ENCODE measurements at regions of chr9 and their contacts with region 1.

Region 1: DNA sequence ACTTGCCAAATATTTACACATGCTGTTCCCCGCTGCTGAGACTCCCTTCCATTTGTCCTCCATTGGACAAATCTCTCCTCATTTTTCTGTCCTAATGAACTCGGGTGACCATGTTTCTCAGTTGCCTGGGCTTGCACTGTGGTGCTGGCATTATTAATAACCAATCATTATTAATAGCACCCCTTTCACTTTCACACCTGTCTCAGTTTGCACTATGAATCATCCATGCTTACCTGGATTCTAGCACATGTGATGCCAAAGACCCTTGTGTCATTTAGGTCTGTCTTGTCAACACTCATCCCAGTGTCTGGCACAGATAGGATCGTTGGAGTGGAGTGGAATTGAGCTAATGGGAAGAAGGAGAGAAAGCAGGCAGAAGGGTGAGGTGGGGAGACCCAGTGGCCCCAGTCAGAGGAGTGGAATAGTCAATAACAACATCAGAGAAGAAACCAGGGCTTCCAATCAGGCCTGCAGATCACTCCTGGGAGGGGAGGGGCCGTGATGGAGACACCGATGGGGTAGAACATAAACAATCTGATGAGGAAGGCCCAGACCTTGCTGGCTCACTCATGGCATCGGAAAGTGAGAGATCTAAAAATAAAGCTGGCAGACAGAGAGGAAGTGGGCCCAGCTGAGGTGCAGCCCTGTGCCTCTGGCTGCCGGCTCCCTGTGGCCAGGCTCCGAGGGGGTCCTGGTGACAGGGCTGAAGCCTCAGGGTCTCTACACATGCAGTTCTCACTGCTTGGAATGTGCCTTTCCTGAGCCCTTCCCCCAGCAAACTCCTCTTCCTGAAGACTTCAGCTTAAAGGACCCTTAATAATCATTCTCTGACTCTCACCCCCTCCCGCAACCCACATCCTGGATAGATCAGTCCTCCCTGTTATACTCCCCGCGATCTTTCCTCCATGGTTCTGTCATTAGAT is 33.5 kb upstream of the CRB2 start:
- DNase-seq: peak; percentile 41 to 80 (median 62)
- ATAC-seq: peak; percentile 90 to 92 (median 92)
- H3K4me3 ChIP-seq: peak overlapping the region; percentile 12 to 29
- H3K4me3 Mint-ChIP-seq: peak overlapping the region; percentile 60 to 79 (median 62)
- H3K27ac ChIP-seq: peak overlapping the region; percentile 63
- H3K27ac Mint-ChIP-seq: peak overlapping the region; percentile 94
- H3K4me1 ChIP-seq: peaks cover 15 to 43% of the 10 kb centered on the region in 2 experiments
- H3K4me1 Mint-ChIP-seq: peaks cover 29 to 49% (median 42%) of the 10 kb centered on the region in 3 donors
- H3K27me3 ChIP-seq: peaks cover 0 to 16% of the 10 kb centered on the region in 2 experiments
- H3K27me3 Mint-ChIP-seq: no peaks in the 10 kb centered on the region

Region 2: DNA sequence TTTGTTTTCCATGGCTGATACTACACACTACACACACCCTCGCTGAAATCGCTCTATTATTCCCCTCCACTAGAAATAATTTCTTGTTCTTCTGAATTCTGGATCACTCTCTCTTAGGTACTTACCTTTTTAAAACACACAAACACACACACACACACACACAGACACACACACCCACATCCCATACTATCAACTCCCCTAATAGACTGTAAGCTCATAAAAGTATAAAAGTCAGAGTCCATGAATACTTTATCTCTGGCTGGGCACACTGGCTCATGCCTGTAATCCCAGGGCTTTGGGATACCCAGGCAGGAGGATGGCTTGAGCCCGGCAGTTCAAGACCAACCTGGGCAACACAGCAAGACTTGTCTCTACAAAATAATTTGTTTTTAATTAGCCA is 65.3 kb before region 1 on chr9:
- CTCF ChIA-PET with region 1: no interaction called
- POLR2A ChIA-PET with region 1: no interaction called
- DNase-seq: no peak
- ATAC-seq: no peak
- H3K4me3 ChIP-seq: no peak overlapping the region
- H3K4me3 Mint-ChIP-seq: no peak overlapping the region
- H3K27ac ChIP-seq: no peak overlapping the region
- H3K27ac Mint-ChIP-seq: no peak overlapping the region
- H3K4me1 ChIP-seq: peaks cover 0 to 7% of the 10 kb centered on the region in 2 experiments
- H3K4me1 Mint-ChIP-seq: peaks cover 48 to 59% (median 55%) of the 10 kb centered on the region in 3 donors
- H3K27me3 ChIP-seq: no peaks in the 10 kb centered on the region
- H3K27me3 Mint-ChIP-seq: no peaks in the 10 kb centered on the region

Region 3: DNA sequence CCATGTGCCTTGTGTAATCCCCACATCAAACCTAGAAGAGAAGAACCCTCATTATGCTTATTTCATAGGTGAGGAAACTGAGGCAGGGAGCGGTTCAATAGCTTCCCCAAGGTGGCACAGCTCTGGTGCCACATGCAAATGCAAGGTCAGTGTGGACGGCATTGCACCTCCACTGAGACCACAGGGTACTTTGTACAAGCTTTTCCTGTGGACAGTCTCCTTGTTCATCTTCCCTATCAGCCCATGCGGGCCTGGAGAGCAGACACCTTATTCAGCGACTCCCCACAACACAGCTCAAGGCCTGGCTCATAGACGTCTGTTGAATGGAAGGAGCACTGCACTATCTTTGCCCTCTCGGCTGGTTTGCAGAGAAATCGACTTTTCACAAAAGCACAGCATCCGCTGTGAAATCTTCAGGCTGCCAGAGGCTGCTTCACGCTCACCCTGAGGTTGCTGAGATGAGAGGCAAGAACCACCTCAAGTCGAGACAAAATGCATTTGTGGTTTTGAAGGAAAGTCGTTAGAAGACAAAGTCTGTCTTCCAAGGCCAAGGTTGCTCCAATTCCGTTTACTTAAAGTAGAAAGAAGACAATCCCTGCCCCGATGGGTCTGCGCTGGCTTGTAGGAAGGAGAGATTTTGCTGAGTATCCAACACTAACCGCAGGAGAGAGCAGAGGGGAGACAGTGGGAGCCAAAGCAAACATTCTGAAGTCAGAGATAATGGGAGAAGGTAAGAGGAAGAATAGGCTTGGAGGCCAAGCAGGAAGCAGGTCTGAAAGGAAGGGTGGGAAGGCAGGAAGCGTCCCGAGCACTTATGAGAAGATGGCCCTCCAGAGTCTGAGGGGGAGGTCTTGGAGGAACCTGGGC is 20.0 kb before region 1 on chr9:
- CTCF ChIA-PET with region 1: interaction called, 4 to 6 read pairs
- POLR2A ChIA-PET with region 1: interaction called in 1 of 2 experiments, 10 read pairs
- DNase-seq: peak in 17 of 35 experiments; percentile 4 to 46 (median 18)
- ATAC-seq: peak; percentile 20 to 71 (median 42)
- H3K4me3 ChIP-seq: peak overlapping the region in 1 of 2 donors; percentile 32
- H3K4me3 Mint-ChIP-seq: peak overlapping the region in 1 of 3 donors; percentile 71
- H3K27ac ChIP-seq: no peak overlapping the region
- H3K27ac Mint-ChIP-seq: peak overlapping the region; percentile 77 to 84
- H3K4me1 ChIP-seq: peaks cover 30 to 43% of the 10 kb centered on the region in 2 experiments
- H3K4me1 Mint-ChIP-seq: peaks cover 34 to 64% (median 44%) of the 10 kb centered on the region in 3 donors
- H3K27me3 ChIP-seq: peaks cover 0 to 8% of the 10 kb centered on the region in 2 experiments
- H3K27me3 Mint-ChIP-seq: no peaks in the 10 kb centered on the region